ENCODE measurements at regions of chr3 and their contacts with region 1.

Region 1: DNA sequence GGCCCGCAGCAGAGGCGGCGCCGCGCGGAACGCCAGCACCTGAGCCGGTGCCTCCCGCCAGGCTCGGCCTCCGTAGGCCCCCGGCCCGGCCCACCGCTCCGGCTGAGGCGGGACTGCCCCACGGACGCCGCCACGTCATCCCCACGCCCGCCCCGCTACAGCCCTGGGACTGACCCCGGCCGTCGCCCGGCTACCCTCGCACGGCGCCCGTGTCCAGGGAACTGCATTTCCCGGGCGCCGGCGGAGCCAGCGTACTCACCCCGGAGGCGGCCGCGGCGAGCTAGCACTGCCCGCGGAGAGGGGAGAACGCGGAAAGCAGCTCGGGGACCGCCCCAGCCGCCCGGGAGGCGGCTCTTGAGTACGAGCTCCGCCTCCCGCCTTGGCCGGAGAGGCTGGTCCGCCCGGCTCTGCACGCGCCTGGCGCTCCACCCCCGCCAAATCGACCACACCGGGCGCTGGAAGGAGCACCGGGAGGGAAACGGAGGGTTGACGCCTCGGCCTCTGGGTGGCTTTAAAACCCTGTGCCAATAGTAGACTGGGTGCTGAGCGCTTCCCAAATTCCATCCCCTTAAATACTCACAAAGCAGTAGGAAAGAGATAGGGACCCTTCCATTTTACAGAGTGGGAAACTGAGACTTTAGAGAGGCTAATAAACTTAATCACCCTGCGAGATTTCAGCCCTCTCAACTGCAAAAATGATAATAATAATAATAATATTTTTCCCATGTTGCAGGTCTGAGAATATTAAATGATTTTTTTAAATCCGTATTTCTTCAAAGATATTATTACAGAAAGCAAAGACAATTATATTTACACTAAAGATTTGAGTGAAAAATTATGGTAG is at the start of gene B4GALT4:
- DNase-seq: peak; percentile 89 to 93 (median 92)
- ATAC-seq: peak; percentile 88 to 97 (median 96)
- H3K4me3 ChIP-seq: peak within 1 kb of the TSS; percentile 45 to 92 (median 73)
- H3K27ac ChIP-seq: peak within 1 kb of the TSS; percentile 75 to 97 (median 91)
- H3K4me1 ChIP-seq: peaks cover 0 to 47% (median 23%) of the 10 kb centered on the region in 12 donors
- H3K27me3 ChIP-seq: no peaks in the 10 kb centered on the region
- CTCF ChIP-seq: peak in 1 of 12 donors; percentile 6
- POLR2A ChIP-seq: peak; percentile 53 to 85
- total RNA-seq, gene B4GALT4: 8.1 to 15.9 (median 10.6) TPM

Region 2: GRCh38 chr3:119084371-119085072 is 156.3 kb before region 1 on chr3:
- intact Hi-C with region 1: no loop called
- DNase-seq: no peak
- ATAC-seq: no peak
- H3K4me3 ChIP-seq: no peak overlapping the region
- H3K27ac ChIP-seq: no peak overlapping the region
- H3K4me1 ChIP-seq: no peaks in the 10 kb centered on the region
- H3K27me3 ChIP-seq: no peaks in the 10 kb centered on the region
- CTCF ChIP-seq: no peak
- POLR2A ChIP-seq: no peak

Region 3: DNA sequence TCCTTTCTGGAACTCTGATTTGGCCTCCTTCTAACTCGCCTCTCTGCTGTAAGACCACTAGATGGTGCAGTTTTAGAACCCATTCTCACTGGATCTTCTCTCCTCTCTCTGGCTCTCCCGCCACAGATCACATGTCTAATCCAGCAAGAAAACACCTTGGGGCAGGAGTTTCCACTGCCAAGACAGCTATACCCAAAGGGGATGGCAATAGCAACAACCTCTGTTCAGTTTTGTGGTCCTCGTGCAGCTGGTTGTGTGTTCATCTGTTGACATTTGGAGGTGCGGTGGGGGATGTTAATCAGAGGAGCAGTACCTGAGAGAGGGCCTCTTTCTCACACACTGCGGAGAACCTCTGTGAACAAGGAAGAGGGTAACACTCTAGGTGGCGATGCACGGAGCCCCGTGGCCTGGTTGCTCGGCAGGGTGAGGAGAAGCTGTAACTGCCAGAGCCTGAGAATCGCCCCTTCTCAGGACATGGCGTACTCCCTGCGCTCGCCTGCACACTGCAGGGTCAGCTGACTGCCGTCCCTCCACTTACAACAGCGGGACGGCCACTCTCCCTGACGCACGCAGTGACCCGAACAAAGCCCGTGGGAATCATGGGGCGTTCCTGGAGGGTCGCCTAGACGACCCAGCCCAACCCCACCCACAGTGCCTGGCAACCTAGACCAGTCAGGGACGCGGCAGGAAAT is 95.2 kb before region 1 on chr3 and contains the start of gene TEX55:
- intact Hi-C with region 1: loop called in 2 of 10 experiments (anchors 5 to 10 kb)
- DNase-seq: peak in 3 of 5 donors; percentile 22 to 37 (median 29)
- ATAC-seq: peak; percentile 59 to 75 (median 66)
- H3K4me3 ChIP-seq: peak within 1 kb of the TSS in 1 of 12 donors; percentile 20
- H3K27ac ChIP-seq: peak within 1 kb of the TSS in 1 of 12 donors; percentile 54
- H3K4me1 ChIP-seq: no peaks in the 10 kb centered on the region
- H3K27me3 ChIP-seq: no peaks in the 10 kb centered on the region
- CTCF ChIP-seq: peak in 11 of 12 donors; percentile 24 to 60 (median 36)
- POLR2A ChIP-seq: no peak
- total RNA-seq, gene TEX55: not detected